ENCODE measurements at regions of chr12 and their contacts with region 1.

Region 1: DNA sequence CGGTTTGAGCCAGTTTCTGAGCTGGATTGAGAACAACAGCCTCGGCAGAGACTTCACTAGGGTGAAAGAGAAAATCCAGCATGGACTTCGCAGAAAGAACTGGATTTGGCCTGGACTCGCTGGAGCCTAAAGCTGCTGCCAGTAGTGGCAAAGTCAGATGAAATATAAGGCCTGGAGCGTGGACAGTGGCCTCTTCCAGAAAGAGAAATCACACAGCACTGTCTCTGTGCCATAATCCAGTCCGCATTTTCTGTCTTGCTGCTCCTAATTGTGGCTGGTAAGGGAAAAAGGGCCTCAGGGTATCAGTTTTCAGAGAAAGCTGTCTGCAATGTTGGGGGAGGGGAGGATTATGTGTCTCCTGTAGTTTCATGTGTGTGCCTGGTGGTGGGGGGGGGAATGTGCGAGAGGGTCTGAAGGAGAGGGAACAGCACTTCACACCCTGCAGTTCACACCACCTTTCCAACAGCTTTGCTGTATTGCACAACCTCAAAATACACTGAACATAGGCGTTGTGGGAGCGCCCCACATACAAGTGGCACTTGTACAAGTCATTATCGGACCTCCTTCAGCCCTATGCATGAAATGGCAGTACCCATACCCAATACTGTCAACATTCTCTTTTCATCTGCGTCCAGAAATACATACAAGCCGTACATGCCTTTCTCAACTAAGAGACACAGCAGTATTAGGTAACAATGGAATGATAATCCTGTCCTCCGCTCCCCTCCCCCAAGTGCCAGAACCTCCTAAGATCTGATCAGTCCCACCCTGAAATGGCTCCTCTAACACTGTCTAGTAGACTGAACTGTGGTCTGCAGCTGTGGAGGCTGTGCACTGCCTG is 107.5 kb upstream of the ATF7IP start:
- DNase-seq: peak in 37 of 42 donors; percentile 77 to 98 (median 92)

Region 2: DNA sequence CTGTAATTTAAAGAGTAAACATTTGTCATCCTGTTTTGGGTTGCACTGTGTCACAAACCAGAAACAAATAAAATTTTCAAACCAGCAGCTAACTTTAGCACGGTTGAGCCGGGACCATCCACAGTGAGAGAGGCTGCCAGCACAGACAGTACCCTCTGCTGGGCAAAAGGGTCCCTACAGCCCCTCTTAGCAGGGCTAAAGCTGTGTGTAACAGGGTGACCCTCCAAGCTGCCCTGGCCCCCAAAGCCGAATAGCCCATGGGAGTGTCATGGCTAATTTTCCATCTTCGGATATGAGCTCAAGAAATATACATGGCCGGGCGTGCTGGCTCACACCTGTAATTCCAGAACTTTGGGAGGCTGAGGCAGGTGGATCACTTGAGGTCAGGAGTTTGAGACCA is 119.5 kb before region 1 on chr12:
- intact Hi-C with region 1: no loop called
- DNase-seq: peak in 8 of 42 donors; percentile 9 to 46 (median 17)

Region 3: GRCh38 chr12:14193639-14194038 is 64.3 kb before region 1 on chr12:
- intact Hi-C with region 1: no loop called
- DNase-seq: no peak

Region 4: GRCh38 chr12:14284184-14284722 is 26.3 kb after region 1 on chr12:
- intact Hi-C with region 1: no loop called
- DNase-seq: no peak

Region 5: DNA sequence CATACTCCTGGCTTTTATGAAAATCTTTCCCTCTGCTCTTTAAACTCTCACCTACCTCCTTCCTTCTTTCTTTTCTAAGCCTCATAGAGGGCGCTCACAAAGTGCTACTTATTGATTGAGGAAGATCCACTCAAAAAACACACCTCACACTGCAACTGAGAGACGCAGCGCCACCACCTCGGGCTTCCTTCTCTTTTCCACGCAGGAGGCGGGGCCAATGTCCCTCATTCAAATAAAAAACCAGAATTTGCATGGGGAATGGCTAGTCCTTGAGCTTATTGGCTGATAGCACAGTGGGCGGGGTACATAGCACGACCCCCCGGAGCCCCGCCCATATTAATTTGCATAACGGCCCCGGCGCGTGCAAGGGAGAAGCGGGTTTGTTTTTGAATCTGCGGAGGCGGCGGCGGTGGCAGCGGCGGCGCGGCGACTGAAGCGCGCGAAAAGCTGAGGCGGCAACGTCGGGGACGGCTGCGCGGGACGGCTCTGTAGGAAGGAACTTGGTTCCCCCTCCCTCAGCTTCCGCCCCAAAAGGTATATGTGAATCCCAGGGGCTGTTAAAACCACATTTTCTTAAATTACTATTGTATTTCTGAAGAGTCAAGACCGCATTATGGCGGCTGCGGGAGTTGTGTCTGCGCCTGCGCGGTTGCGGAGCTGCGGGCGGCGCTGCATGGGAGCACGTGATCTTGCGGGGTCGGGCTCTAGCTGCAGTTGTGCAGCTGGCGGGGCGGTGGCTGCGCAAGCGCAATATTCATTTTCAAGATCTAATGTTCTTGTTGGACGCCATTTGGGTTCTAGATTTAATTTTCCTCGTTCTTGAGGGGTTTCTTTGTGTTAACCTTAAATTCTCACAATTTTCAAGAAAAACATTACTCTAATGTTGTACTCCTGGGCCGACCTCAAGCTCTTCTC is 107.6 kb after region 1 on chr12 and contains the start of gene ATF7IP:
- intact Hi-C with region 1: loop called (anchors 2 kb)
- DNase-seq: peak; percentile 87 to 98 (median 94)

Region 6: GRCh38 chr12:14417715-14418114 is 159.8 kb after region 1 on chr12:
- intact Hi-C with region 1: loop called (anchors 10 kb)
- DNase-seq: peak; percentile 14 to 85 (median 71)

Region 7: DNA sequence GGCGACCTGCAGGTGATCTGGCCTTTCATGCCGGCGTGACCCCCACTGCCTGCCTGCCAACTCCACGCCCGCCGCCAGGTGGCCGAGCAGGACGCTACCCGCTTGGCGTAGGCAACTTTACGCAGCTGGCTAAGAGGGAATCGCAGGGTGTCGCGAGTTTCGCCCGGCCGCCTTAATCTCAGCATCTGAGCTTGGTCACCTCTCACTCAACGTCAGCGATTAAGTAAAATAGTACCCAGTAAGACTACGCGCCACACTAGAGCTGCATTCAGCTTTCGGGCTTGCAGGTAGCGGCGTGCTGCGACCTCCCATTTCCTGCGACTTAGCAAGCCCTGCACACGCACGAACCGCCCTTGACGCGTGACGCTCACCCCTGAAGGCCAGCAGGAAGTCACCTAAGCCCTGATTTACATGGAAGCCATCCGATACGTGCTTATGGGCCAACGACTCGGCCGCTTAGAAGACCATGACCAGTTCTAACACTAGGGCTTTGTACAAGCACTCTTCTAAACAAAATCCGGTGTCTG is 512.1 kb after region 1 on chr12:
- intact Hi-C with region 1: loop called (anchors 10 kb)
- DNase-seq: peak; percentile 51 to 88 (median 75)